ENCODE measurements at regions of chrX and their contacts with region 1.

Region 1: DNA sequence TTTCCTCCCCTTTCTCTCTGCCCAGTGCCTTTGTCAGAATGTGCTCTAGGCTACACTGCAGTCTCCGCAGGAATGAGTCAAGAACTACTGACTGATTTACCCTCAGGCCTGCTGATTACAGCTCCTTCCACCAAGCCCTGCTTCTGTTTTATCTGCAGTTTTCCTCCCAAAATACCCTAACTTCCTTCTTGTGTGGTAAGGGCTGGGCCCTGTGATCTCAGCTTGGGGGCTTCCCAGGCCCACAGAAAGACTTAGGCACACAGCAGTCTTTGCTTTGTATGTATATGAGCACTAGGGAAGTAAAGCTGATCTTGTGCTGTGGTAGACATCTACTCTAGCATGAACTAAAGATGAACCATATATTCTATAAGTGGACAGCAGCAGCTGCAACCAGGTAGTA is 18.8 kb downstream of the PAK3 start:
- DNase-seq: no peak
- ATAC-seq: no peak
- H3K4me3 ChIP-seq: no peak overlapping the region
- H3K27ac ChIP-seq: no peak overlapping the region
- H3K4me1 ChIP-seq: no peaks in the 10 kb centered on the region
- H3K27me3 ChIP-seq: peaks cover 0 to 6% (median 0%) of the 10 kb centered on the region in 3 donors
- CTCF ChIP-seq: no peak

Region 2: GRCh38 chrX:110750526-110751189 is 364.1 kb before region 1 on chrX:
- intact Hi-C with region 1: loop called in 1 of 2 experiments (anchors 5 kb)
- DNase-seq: no peak
- ATAC-seq: no peak
- H3K4me3 ChIP-seq: no peak overlapping the region
- H3K27ac ChIP-seq: no peak overlapping the region
- H3K4me1 ChIP-seq: no peaks in the 10 kb centered on the region
- H3K27me3 ChIP-seq: peaks cover 0 to 16% (median 0%) of the 10 kb centered on the region in 3 donors
- CTCF ChIP-seq: no peak

Measured in psoas muscle (tissue), 8 donors.